Calu3 (cell line): ENCODE measurements at regions of chr9 and their contacts with region 1.

Region 1: GRCh38 chr9:81682797-81683196 is 6.5 kb downstream of the TLE1 start:
- DNase-seq: peak; percentile 13
- H3K4me3 Mint-ChIP-seq: no peak overlapping the region
- H3K27ac Mint-ChIP-seq: no peak overlapping the region
- H3K4me1 Mint-ChIP-seq: peaks cover 8% of the 10 kb centered on the region
- H3K27me3 Mint-ChIP-seq: no peaks in the 10 kb centered on the region
- CTCF ChIP-seq: no peak

Region 2: DNA sequence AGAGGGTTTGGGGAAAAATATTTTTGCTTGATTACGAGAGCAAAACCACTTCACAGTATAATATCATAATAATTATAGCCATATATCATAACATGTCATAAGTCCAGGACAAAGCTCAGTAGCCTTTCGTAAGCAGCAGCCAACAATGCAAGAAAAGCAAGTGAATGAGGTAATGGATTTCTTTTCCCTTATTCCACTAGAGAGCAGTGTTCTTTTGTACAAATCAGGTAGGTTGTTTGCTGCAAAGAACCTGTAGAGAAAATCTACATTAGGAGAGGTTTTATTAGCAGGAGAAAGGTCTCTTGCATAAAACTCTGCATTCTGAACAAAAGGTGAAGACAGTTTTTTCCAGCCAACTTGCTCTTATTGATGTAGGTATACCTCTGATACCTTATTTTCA is 1077.7 kb before region 1 on chr9:
- CTCF ChIA-PET with region 1: no interaction called
- intact Hi-C with region 1: loop called (anchors 5 kb)
- DNase-seq: no peak
- H3K4me3 Mint-ChIP-seq: no peak overlapping the region
- H3K27ac Mint-ChIP-seq: no peak overlapping the region
- H3K4me1 Mint-ChIP-seq: no peaks in the 10 kb centered on the region
- H3K27me3 Mint-ChIP-seq: no peaks in the 10 kb centered on the region
- CTCF ChIP-seq: no peak